Kidney (tissue), 22 donors: ENCODE measurements at regions of chr13 and their contacts with region 1.

Region 1: GRCh38 chr13:32639502-32640105 is 53.4 kb downstream of the PDS5B start:
- DNase-seq: peak in 3 of 5 donors; percentile 28 to 80 (median 60)
- H3K4me3 ChIP-seq: no peak overlapping the region
- H3K27ac ChIP-seq: no peak overlapping the region
- H3K4me1 ChIP-seq: peaks cover 0 to 3% (median 0%) of the 10 kb centered on the region in 3 donors
- H3K27me3 ChIP-seq: no peaks in the 10 kb centered on the region
- CTCF ChIP-seq: peak; percentile 87

Region 2: DNA sequence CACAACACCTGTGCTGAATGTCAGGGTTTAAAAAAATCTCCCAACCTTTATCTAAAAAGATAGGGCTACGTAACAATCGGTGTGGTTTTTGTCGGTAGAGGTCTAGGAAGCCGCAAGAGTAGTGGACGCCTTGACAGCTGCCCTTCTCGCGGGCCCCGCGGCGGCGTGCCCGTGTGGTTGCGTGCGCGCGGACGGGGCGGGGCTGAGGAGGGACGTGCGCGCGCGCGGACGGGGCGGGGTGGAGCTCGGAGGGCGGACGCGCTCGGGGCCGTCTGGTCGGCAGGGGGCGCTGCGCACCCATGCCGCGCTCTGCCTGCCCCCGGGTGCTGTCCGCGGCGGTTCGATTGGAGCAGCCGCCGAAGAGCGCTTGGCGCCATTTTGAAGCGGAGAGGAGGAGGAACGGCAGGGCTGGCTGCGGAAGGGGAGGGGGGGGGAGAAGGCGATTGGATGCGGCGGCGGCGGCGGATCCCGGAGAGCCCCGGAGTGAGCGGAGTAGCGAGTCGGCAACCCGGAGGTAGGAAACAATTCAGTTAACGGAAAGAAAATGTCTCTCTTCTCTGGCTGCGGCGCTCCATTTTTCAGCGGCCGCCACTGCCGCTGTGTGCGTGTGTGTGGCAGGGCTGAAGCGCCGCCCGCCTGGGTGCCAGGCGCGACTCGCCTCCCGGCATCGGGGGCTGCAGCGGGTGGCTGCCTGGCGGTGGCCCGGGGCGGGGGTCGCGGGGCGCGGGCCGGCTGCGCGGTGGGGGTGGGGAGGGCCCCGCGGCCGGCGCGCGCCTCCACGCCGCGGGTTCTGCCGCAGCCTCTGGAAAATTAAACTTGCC is 53.3 kb before region 1 on chr13 and contains the start of gene PDS5B:
- intact Hi-C with region 1: loop called (anchors 10 kb)
- DNase-seq: peak; percentile 96 to 98 (median 98)
- H3K4me3 ChIP-seq: peak within 1 kb of the TSS; percentile 95 to 96 (median 96)
- H3K27ac ChIP-seq: peak within 1 kb of the TSS; percentile 88 to 97
- H3K4me1 ChIP-seq: peaks cover 0 to 11% (median 4%) of the 10 kb centered on the region in 3 donors
- H3K27me3 ChIP-seq: no peaks in the 10 kb centered on the region
- CTCF ChIP-seq: peak; percentile 94
- total RNA-seq, gene PDS5B: 41.2 TPM

Region 3: GRCh38 chr13:33069365-33069764 is 429.8 kb after region 1 on chr13:
- intact Hi-C with region 1: no loop called
- DNase-seq: no peak
- H3K4me3 ChIP-seq: no peak overlapping the region
- H3K27ac ChIP-seq: no peak overlapping the region
- H3K4me1 ChIP-seq: no peaks in the 10 kb centered on the region
- H3K27me3 ChIP-seq: no peaks in the 10 kb centered on the region
- CTCF ChIP-seq: peak; percentile 13